ENCODE measurements at regions of chr12 and their contacts with region 1.

Region 1: GRCh38 chr12:57836442-57837375 is 9.8 kb downstream of the CTDSP2 start:
- DNase-seq: peak; percentile 89
- H3K4me3 ChIP-seq: peak overlapping the region in 3 of 4 donors; percentile 14 to 24 (median 20)
- H3K27ac ChIP-seq: peak overlapping the region; percentile 64 to 100 (median 100)
- H3K4me1 ChIP-seq: peaks cover 0 to 100% (median 99%) of the 10 kb centered on the region in 4 donors
- H3K27me3 ChIP-seq: no peaks in the 10 kb centered on the region
- CTCF ChIP-seq: no peak
- EP300 ChIP-seq: no peak
- POLR2A ChIP-seq: no peak

Region 2: DNA sequence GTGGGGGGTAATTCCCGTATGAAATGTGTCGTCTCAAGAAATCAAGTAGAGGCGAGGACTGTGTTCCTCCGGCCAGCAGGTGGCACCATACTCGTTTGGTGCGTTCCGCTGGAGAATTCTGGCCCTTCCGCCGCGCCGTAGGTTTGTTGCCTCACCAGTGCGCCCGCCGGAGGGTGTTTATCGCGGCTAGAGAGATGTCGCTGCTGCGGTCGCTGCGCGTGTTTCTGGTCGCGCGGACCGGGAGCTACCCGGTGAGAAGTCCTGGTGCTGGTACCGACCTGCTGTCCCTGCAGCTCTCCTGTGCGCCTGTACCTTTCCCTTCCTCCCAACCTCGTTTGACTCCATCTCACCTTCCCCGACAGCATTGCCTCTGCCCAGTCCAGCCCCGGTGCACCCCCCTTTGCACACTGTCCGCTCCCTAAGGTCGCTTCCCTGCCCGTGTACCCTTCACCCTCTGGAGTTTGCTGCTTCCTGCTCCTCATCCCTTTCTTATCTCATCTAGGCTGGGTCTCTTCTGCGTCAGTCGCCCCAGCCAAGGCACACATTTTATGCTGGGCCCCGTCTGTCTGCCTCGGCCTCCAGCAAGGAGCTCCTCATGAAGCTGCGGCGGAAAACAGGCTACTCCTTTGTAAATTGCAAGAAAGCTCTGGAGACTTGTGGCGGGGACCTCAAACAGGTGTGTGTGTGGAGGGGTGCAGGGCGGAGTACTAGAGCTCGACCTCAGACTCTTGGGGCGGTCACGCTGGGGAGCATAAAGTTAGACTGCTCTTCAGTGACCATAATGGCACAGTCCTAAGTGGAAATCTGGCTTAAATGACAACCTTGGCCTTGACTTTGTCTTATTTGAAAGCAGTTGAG is 53.9 kb before region 1 on chr12 and contains the start of gene TSFM:
- intact Hi-C with region 1: loop called (anchors 10 kb)
- DNase-seq: peak; percentile 97
- H3K4me3 ChIP-seq: peak within 1 kb of the TSS; percentile 56 to 99 (median 80)
- H3K27ac ChIP-seq: peak within 1 kb of the TSS; percentile 61 to 86 (median 75)
- H3K4me1 ChIP-seq: peaks cover 0 to 19% (median 14%) of the 10 kb centered on the region in 4 donors
- H3K27me3 ChIP-seq: no peaks in the 10 kb centered on the region
- CTCF ChIP-seq: peak; percentile 80 to 94 (median 92)
- EP300 ChIP-seq: peak in 1 of 4 donors; percentile 41
- POLR2A ChIP-seq: peak in 1 of 2 donors; percentile 26
- total RNA-seq, gene TSFM: 8.0 to 29.6 (median 25.3) TPM

Region 3: GRCh38 chr12:57899010-57899662 is 62.4 kb after region 1 on chr12:
- intact Hi-C with region 1: loop called (anchors 1 kb)
- DNase-seq: peak; percentile 86
- H3K4me3 ChIP-seq: no peak overlapping the region
- H3K27ac ChIP-seq: peak overlapping the region; percentile 93 to 99 (median 98)
- H3K4me1 ChIP-seq: peaks cover under 1 to 54% (median 53%) of the 10 kb centered on the region in 4 donors
- H3K27me3 ChIP-seq: no peaks in the 10 kb centered on the region
- CTCF ChIP-seq: no peak
- EP300 ChIP-seq: no peak
- POLR2A ChIP-seq: no peak

Region 4: GRCh38 chr12:57935839-57936512 is 99.3 kb after region 1 on chr12:
- intact Hi-C with region 1: no loop called
- DNase-seq: peak; percentile 96
- H3K4me3 ChIP-seq: peak overlapping the region; percentile 50 to 64 (median 58)
- H3K27ac ChIP-seq: peak overlapping the region; percentile 63 to 78 (median 74)
- H3K4me1 ChIP-seq: peaks cover 0 to 22% (median 12%) of the 10 kb centered on the region in 4 donors
- H3K27me3 ChIP-seq: no peaks in the 10 kb centered on the region
- CTCF ChIP-seq: no peak
- EP300 ChIP-seq: peak in 1 of 4 donors; percentile 31
- POLR2A ChIP-seq: no peak

Measured in sigmoid colon (tissue), 7 donors.